CD4-positive, alpha-beta T cell (primary cell): ENCODE measurements at regions of chr2 and their contacts with region 1.

Region 1: GRCh38 chr2:177263451-177264208 is 897 bp downstream of the NFE2L2 start:
- DNase-seq: peak; percentile 91 to 98 (median 96)
- ATAC-seq: peak; percentile 66
- H3K4me3 ChIP-seq: peak overlapping the region; percentile 72
- H3K4me3 Mint-ChIP-seq: peak overlapping the region; percentile 98
- H3K27ac ChIP-seq: peak overlapping the region; percentile 96 to 100
- H3K27ac Mint-ChIP-seq: peak overlapping the region; percentile 99
- H3K4me1 ChIP-seq: peaks cover 31% of the 10 kb centered on the region
- H3K4me1 Mint-ChIP-seq: peaks cover 65% of the 10 kb centered on the region
- H3K27me3 ChIP-seq: no peaks in the 10 kb centered on the region
- H3K27me3 Mint-ChIP-seq: no peaks in the 10 kb centered on the region
- CTCF ChIP-seq: peak; percentile 88

Region 2: DNA sequence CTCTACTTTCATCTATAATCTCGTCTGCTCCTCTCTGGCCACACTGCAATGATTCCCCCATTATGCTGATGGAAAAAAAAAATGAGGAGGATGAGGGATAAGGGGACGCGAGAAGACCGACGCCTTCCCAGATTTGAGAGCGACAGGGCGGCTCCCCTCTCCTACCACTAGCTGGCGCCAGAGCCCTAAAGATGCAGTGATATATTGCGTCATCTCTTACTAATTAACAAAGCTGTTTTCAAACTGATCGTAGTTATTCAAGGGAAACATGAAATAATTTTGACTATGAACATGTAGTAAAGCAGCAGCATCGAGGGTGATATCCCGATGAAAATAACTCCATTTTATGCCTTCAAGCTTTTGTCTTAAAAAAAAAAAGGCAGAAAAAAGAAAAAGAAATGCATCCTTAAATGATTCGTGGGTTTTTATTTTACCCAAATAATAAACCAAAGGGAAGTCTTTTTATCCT is 99.0 kb before region 1 on chr2:
- CTCF ChIA-PET with region 1: interaction called, 71 read pairs
- POLR2A ChIA-PET with region 1: interaction called, 277 read pairs
- intact Hi-C with region 1: loop called (anchors 1 to 10 kb)
- DNase-seq: peak; percentile 63 to 88 (median 76)
- ATAC-seq: peak; percentile 75
- H3K4me3 ChIP-seq: peak overlapping the region; percentile 33
- H3K4me3 Mint-ChIP-seq: no peak overlapping the region
- H3K27ac ChIP-seq: no peak overlapping the region
- H3K27ac Mint-ChIP-seq: no peak overlapping the region
- H3K4me1 ChIP-seq: peaks cover 14% of the 10 kb centered on the region
- H3K4me1 Mint-ChIP-seq: peaks cover 16% of the 10 kb centered on the region
- H3K27me3 ChIP-seq: no peaks in the 10 kb centered on the region
- H3K27me3 Mint-ChIP-seq: no peaks in the 10 kb centered on the region
- CTCF ChIP-seq: peak; percentile 99

Region 3: DNA sequence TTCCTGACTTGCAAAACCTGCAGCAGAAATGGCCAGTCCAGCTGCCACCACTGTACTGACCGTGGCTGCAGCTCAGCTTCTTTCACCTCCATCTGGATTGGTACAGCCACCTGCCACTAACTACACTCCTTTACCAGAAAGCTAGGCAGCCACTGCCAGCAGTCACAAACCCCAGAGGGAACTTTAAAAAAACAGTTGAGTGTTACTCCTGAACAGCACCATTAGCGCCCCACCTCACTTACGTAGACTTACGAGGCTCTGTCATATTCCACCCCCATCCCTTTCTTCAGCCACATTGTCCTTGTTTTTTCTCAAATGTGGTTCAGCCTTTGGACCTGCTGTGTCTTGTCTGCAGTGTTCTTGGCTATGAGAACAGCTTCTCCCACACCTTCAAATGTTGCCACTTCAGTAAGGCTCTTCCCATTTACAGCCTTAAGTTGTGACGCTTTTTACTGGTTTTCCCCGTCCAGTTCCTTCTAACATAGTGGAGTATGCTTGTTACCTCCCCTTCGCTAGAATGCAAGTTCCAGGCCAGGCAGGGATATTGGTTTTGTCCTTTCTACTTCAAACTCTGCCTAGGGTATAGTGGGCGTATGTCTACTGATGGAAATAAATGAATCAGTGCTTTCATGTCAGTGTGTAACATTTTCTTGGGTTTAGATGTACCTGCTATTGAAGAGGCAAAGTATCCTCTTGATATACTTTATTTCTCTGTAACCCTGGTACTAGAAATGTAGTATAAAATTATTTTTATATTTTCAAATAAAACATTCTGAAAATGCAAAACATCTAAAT is 34.0 kb before region 1 on chr2:
- CTCF ChIA-PET with region 1: interaction called, 17 read pairs
- POLR2A ChIA-PET with region 1: interaction called, 141 read pairs
- intact Hi-C with region 1: loop called in 1 of 2 experiments (anchors 5 kb)
- DNase-seq: no peak
- ATAC-seq: peak; percentile 12
- H3K4me3 ChIP-seq: no peak overlapping the region
- H3K4me3 Mint-ChIP-seq: no peak overlapping the region
- H3K27ac ChIP-seq: no peak overlapping the region
- H3K27ac Mint-ChIP-seq: peak overlapping the region; percentile 33
- H3K4me1 ChIP-seq: no peaks in the 10 kb centered on the region
- H3K4me1 Mint-ChIP-seq: peaks cover 62% of the 10 kb centered on the region
- H3K27me3 ChIP-seq: no peaks in the 10 kb centered on the region
- H3K27me3 Mint-ChIP-seq: no peaks in the 10 kb centered on the region
- CTCF ChIP-seq: no peak

Region 4: GRCh38 chr2:177281400-177282180 is 18.0 kb after region 1 on chr2:
- CTCF ChIA-PET with region 1: no interaction called
- POLR2A ChIA-PET with region 1: interaction called, 59 read pairs
- intact Hi-C with region 1: no loop called
- DNase-seq: peak in 2 of 14 experiments; percentile 48 to 65
- ATAC-seq: no peak
- H3K4me3 ChIP-seq: no peak overlapping the region
- H3K4me3 Mint-ChIP-seq: no peak overlapping the region
- H3K27ac ChIP-seq: no peak overlapping the region
- H3K27ac Mint-ChIP-seq: no peak overlapping the region
- H3K4me1 ChIP-seq: no peaks in the 10 kb centered on the region
- H3K4me1 Mint-ChIP-seq: no peaks in the 10 kb centered on the region
- H3K27me3 ChIP-seq: no peaks in the 10 kb centered on the region
- H3K27me3 Mint-ChIP-seq: no peaks in the 10 kb centered on the region
- CTCF ChIP-seq: no peak

Region 5: DNA sequence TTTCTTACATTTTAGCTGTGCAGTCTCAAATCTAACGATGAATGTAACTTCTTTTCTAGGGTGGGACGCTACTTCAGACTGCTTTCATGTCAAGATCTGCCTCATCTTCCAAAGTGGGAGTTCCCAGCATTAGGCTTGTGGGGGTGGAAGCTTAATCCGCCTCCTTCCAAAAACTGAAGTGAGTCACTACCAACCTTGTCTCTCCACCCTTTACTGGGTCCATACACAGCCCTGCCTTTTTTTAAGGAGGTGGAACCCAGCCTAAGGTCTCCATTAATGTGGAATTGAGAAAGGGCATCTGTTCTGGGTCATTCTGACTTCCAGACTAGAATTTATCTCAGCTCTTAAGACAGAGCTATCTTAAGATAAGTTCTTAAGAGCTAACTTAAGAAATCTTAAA is 42.9 kb after region 1 on chr2:
- CTCF ChIA-PET with region 1: interaction called, 7 read pairs
- POLR2A ChIA-PET with region 1: interaction called, 262 read pairs
- intact Hi-C with region 1: loop called in 1 of 2 experiments (anchors 5 kb)
- DNase-seq: no peak
- ATAC-seq: no peak
- H3K4me3 ChIP-seq: no peak overlapping the region
- H3K4me3 Mint-ChIP-seq: no peak overlapping the region
- H3K27ac ChIP-seq: no peak overlapping the region
- H3K27ac Mint-ChIP-seq: peak overlapping the region; percentile 90
- H3K4me1 ChIP-seq: peaks cover 21% of the 10 kb centered on the region
- H3K4me1 Mint-ChIP-seq: peaks cover 41% of the 10 kb centered on the region
- H3K27me3 ChIP-seq: no peaks in the 10 kb centered on the region
- H3K27me3 Mint-ChIP-seq: no peaks in the 10 kb centered on the region
- CTCF ChIP-seq: no peak

Region 6: DNA sequence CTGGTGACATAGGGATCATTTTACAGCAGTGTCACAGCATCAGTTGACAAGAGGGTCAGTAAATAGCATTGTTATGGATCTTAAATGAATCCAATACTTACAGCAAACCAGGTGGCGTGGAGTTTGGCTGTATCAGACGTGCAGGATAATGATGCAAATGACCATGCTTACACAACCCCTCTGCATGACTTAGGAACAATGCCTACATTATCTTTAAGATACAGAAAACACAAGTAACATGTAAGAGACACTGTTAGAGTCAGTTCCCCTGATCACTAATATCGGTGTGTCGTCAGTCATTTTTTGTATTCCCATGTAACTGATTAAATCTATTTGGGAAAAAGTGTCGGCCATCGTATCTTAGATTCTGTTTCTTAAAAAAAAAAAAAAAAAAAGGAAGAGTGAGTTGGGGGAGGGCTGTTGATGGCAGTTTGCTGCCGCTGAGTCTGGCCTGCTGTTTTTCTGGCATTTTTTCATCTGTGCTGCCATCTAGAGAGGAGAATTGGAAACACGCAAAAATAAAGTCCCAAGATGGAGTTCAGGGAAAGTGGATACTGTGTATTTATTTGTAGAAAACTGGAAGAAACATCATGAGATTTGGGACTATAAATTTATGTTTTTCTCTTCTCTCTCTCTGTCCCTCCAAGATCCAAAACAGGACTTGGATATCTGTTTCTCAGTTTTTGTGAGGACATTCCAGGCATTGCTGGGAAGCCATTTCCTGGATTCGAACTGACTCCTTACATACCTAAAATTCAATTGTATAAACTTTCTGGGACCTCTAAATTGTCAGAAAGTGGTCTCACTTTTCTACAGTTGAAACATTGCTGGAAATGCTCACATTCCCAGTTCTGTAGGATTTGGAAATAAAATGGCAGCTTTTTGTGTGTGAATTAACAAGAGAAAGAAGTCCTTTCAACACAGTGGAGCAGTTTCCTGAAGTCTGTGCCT is 68.7 kb after region 1 on chr2:
- CTCF ChIA-PET with region 1: interaction called, 9 read pairs
- POLR2A ChIA-PET with region 1: interaction called, 66 read pairs
- intact Hi-C with region 1: loop called (anchors 1 kb)
- DNase-seq: peak in 12 of 14 experiments; percentile 9 to 81 (median 22)
- ATAC-seq: peak; percentile 88
- H3K4me3 ChIP-seq: no peak overlapping the region
- H3K4me3 Mint-ChIP-seq: peak overlapping the region; percentile 1
- H3K27ac ChIP-seq: no peak overlapping the region
- H3K27ac Mint-ChIP-seq: no peak overlapping the region
- H3K4me1 ChIP-seq: peaks cover 7% of the 10 kb centered on the region
- H3K4me1 Mint-ChIP-seq: peaks cover 10% of the 10 kb centered on the region
- H3K27me3 ChIP-seq: no peaks in the 10 kb centered on the region
- H3K27me3 Mint-ChIP-seq: no peaks in the 10 kb centered on the region
- CTCF ChIP-seq: peak; percentile 72

Region 7: GRCh38 chr2:178152033-178152432 is 888.4 kb after region 1 on chr2:
- CTCF ChIA-PET with region 1: no interaction called
- POLR2A ChIA-PET with region 1: no interaction called
- intact Hi-C with region 1: no loop called
- DNase-seq: no peak
- ATAC-seq: no peak
- H3K4me3 ChIP-seq: no peak overlapping the region
- H3K4me3 Mint-ChIP-seq: no peak overlapping the region
- H3K27ac ChIP-seq: no peak overlapping the region
- H3K27ac Mint-ChIP-seq: no peak overlapping the region
- H3K4me1 ChIP-seq: no peaks in the 10 kb centered on the region
- H3K4me1 Mint-ChIP-seq: no peaks in the 10 kb centered on the region
- H3K27me3 ChIP-seq: peaks cover 8 to 16% of the 10 kb centered on the region in 2 experiments
- H3K27me3 Mint-ChIP-seq: peaks cover 44% of the 10 kb centered on the region
- CTCF ChIP-seq: no peak

Region 8: GRCh38 chr2:178450774-178451525 is 1187.3 kb after region 1 on chr2 and contains the starts of genes PJVK and PRKRA:
- CTCF ChIA-PET with region 1: no interaction called
- POLR2A ChIA-PET with region 1: interaction called, 9 read pairs
- intact Hi-C with region 1: loop called in 1 of 2 experiments (anchors 10 kb)
- DNase-seq: peak; percentile 90 to 98 (median 95)
- ATAC-seq: peak; percentile 84
- H3K4me3 ChIP-seq: peak within 1 kb of the TSS; percentile 77
- H3K4me3 Mint-ChIP-seq: peak within 1 kb of the TSS; percentile 91
- H3K27ac ChIP-seq: peak within 1 kb of the TSS; percentile 78 to 98
- H3K27ac Mint-ChIP-seq: peak within 1 kb of the TSS; percentile 97
- H3K4me1 ChIP-seq: peaks cover 27% of the 10 kb centered on the region
- H3K4me1 Mint-ChIP-seq: peaks cover 35% of the 10 kb centered on the region
- H3K27me3 ChIP-seq: no peaks in the 10 kb centered on the region
- H3K27me3 Mint-ChIP-seq: no peaks in the 10 kb centered on the region
- CTCF ChIP-seq: no peak
- total RNA-seq, gene PJVK: 3.8 to 4.2 TPM
- total RNA-seq, gene PRKRA: 118 to 120 TPM